MCF 10A (cell line): ENCODE measurements at regions of chrX and their contacts with region 1.

Region 1: DNA sequence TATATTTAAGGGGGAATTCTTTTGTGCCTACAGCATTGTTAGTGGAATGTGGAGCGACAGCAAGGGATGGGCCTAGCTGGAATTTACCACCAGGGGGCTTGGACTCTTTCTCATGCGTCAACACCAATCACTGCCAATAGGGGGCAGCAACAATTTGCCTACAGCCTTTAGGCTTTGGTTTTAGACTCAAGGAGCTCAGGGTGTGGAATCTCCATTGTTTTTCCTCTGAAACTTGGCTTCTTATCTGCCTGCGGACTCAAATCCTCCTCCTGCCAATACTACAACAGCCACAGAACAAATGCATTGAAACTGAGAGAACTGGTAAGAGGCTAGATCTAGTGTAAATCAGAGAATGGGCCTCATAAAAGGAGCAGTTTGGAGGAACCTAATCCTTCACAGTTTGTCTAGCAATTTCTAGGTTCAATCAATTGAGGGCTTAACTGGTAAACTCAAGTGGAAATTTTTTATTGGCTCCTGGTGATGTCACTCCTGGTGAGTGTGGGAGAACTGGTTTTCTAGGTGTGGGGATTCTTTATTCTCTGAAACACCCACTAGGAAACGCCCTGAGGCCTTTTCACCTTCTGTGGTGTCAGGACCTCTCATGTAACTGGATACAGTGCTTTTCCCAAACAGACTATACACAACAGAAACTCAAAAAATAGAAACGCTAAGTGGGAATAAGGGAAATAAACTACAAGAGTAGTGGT is 27.9 kb upstream of the TMSB4X start:
- DNase-seq: peak; percentile 91
- H3K4me3 Mint-ChIP-seq: no peak overlapping the region
- H3K27ac Mint-ChIP-seq: peak overlapping the region; percentile 80
- H3K4me1 Mint-ChIP-seq: peaks cover 12% of the 10 kb centered on the region
- H3K27me3 Mint-ChIP-seq: peaks cover 27% of the 10 kb centered on the region
- CTCF ChIP-seq: peak; percentile 98

Region 2: DNA sequence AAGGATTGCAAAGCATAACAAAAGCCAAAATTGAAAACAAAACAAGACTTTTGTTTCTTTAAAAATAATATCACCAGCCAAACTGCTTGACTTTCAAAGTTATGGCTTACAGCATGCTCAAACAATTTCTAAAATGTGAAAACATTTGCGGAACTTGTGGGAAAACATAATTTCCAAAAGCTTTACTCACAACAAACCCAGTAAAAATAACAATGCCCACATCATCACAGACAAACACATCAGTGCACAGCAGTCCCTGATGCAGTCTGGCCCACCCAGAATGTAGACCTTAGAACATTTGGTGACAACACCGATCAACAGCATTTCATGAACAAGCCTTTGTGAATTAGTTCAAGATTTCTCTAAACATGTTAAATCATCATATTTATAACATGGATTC is 1380.2 kb before region 1 on chrX:
- CTCF ChIA-PET with region 1: no interaction called
- POLR2A ChIA-PET with region 1: no interaction called
- intact Hi-C with region 1: no loop called
- DNase-seq: no peak
- H3K4me3 Mint-ChIP-seq: no peak overlapping the region
- H3K27ac Mint-ChIP-seq: no peak overlapping the region
- H3K4me1 Mint-ChIP-seq: no peaks in the 10 kb centered on the region
- H3K27me3 Mint-ChIP-seq: peaks cover 4% of the 10 kb centered on the region
- CTCF ChIP-seq: no peak

Region 3: DNA sequence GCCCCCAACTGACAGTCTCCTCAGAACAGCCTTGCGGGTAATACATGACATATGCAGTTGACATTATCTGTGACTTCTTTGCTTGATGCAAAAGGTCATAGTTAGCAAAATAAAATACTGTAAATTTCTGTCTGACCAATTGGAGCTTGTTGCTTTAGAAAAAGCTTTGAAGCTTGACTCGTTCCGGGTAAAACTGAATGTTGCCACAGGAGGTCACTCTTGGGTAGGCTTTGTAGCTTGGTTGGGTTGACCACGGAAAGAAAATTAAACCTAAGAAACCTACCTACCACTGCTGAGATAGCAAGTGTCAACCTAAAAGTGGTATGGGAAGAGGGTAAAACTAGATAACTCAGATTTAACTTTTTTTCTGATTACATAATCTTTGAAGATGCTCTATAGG is 132.6 kb before region 1 on chrX:
- CTCF ChIA-PET with region 1: interaction called, 14 read pairs
- POLR2A ChIA-PET with region 1: no interaction called
- intact Hi-C with region 1: no loop called
- DNase-seq: peak; percentile 64
- H3K4me3 Mint-ChIP-seq: no peak overlapping the region
- H3K27ac Mint-ChIP-seq: no peak overlapping the region
- H3K4me1 Mint-ChIP-seq: peaks cover 5% of the 10 kb centered on the region
- H3K27me3 Mint-ChIP-seq: peaks cover 21% of the 10 kb centered on the region
- CTCF ChIP-seq: peak; percentile 57

Region 4: DNA sequence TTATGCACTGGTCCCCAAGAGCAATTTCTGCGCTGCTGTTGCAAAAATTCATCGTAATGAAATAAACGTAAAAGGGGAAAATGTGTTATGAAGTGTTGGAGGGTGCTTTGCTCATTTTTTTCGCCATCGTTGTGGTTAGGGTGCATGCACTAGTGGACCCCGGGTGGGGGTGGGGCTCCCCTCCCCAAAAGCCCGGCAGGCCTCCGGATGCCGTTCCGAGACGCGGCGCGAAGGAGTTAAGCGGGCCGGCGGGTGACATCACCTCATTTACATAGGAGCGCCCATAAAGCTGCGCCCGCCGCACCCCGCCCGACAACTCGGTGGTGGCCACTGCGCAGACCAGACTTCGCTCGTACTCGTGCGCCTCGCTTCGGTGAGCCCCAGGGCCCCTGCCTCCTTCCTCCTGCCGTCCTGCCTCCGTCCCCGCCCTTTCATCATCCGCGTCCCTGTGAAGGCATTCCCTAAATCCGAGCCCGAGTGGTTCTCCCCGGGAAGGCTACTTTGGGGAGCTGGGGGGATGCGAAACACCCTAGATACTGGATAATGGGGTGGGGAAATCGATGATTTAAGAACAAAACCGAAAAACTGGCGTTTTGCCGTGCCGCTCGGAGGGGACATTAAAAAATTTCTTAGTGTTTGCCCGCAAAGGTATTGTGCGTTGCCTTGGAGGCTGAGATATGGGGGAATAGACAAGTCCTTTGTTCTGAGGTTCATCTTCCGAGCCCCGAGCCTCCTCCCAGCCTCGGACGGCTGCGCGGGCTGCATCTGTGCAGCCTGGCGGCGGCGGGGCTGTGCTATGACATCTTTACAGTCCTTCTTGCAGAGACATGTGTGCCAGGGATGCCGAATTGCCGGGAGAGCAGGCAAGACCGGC is 28.0 kb after region 1 on chrX and contains the start of gene TMSB4X:
- CTCF ChIA-PET with region 1: interaction called, 6 read pairs
- POLR2A ChIA-PET with region 1: interaction called, 6 read pairs
- intact Hi-C with region 1: loop called (anchors 1 kb)
- DNase-seq: peak; percentile 75
- H3K4me3 Mint-ChIP-seq: peak within 1 kb of the TSS; percentile 88
- H3K27ac Mint-ChIP-seq: peak within 1 kb of the TSS; percentile 84
- H3K4me1 Mint-ChIP-seq: peaks cover 8% of the 10 kb centered on the region
- H3K27me3 Mint-ChIP-seq: peaks cover 18% of the 10 kb centered on the region
- CTCF ChIP-seq: no peak
- total RNA-seq, gene TMSB4X: 801 and 901 TPM in 2 replicates

Region 5: DNA sequence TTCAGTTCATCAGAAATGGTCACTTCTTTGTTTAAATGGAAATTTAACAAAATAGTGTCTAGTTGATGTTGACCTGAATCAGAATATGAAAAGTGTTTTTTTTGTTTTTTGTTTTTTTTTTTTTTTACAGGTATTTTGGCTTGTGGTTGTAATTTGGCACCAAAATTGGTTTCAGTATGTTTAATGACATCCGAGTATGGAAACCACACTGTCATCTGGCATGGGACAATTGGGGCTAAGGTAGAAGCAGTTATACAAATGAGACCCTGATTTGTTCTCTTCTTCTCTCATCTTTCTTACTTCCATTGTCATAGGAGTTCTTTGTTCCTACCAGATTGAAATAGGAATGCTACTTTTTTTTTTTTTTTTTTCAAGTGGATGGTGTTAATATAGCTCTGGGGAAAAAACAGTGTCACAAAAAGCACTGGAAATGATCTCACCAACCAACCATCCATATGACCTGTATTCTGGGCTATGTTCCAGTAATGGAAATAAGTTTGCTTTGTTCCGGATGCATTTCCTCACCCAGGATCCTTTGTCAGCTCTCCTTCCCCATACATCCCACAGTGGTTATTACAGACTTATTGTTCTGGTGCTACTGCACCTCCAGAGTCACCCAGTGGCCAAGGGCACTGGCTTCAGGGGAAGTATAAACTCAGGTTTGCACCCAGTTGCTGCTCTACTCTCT is 277.0 kb after region 1 on chrX:
- CTCF ChIA-PET with region 1: interaction called, 6 read pairs
- POLR2A ChIA-PET with region 1: no interaction called
- intact Hi-C with region 1: loop called (anchors 1 kb)
- DNase-seq: peak; percentile 95
- H3K4me3 Mint-ChIP-seq: no peak overlapping the region
- H3K27ac Mint-ChIP-seq: peak overlapping the region; percentile 67
- H3K4me1 Mint-ChIP-seq: peaks cover 16% of the 10 kb centered on the region
- H3K27me3 Mint-ChIP-seq: peaks cover 20% of the 10 kb centered on the region
- CTCF ChIP-seq: no peak

Region 6: DNA sequence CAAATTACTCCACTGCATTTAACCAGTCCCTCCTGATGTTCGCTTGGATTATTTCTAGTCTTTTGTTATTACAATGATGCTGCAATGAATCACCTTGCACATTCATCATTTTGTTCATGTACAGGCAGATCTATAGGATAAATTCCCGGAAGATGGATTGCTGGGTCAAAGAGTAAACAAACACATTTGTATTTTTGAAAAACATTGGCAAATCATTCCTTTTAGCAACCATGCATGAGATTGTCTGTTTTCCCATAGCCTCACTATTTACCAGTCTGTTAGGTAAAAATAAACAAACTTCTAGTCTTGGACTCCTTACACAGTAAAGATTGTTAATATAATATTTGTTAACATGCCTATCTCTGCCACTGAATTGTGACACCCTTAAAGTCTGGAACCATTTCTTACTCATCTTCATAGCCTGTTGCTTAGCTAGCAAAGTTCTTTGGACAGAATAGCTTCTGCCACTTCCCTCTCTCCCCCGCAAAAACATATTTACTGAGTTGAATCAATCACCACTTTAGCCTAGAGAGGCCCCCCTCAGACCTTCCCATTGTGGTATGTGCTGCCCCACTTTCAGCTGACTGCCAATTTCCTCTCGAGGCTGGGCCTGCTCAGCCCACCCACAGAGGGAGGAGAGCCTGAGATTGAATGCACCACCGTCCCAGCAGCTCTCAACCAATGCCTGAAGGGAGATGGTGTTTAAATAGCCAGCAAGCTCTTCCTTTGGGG is 481.2 kb after region 1 on chrX:
- CTCF ChIA-PET with region 1: interaction called, 19 read pairs
- POLR2A ChIA-PET with region 1: interaction called, 3 read pairs
- intact Hi-C with region 1: no loop called
- DNase-seq: peak; percentile 96
- H3K4me3 Mint-ChIP-seq: no peak overlapping the region
- H3K27ac Mint-ChIP-seq: peak overlapping the region; percentile 37
- H3K4me1 Mint-ChIP-seq: peaks cover 28% of the 10 kb centered on the region
- H3K27me3 Mint-ChIP-seq: no peaks in the 10 kb centered on the region
- CTCF ChIP-seq: no peak

Region 7: DNA sequence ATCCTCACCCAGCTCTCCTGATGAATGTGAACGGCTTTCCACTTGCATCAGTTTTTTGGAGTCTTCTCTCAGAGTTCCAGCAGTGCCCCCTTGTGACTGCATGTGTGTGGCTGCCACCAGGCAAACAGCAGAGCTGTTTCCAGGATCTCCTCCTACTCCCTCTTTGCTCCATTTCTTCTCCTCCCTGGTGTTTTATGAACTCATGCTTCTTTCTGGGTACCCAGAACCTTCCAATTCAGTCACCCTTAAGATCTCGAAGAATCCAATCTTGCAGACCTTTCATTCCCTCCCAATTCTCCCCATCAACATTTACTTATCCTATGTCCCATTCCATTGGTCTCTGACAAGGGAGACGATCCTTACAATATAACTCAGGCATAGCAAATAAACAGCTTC is 699.2 kb after region 1 on chrX:
- CTCF ChIA-PET with region 1: interaction called, 10 read pairs
- POLR2A ChIA-PET with region 1: no interaction called
- intact Hi-C with region 1: no loop called
- DNase-seq: peak; percentile 77
- H3K4me3 Mint-ChIP-seq: no peak overlapping the region
- H3K27ac Mint-ChIP-seq: no peak overlapping the region
- H3K4me1 Mint-ChIP-seq: peaks cover 8% of the 10 kb centered on the region
- H3K27me3 Mint-ChIP-seq: peaks cover 55% of the 10 kb centered on the region
- CTCF ChIP-seq: peak; percentile 54